ENCODE measurements at regions of chr10 and their contacts with region 1.

Region 1: GRCh38 chr10:114694752-114695151 is 36.7 kb upstream of the ABLIM1 start:
- DNase-seq: peak in 1 of 2 experiments; percentile 81
- H3K4me3 ChIP-seq: no peak overlapping the region
- H3K27ac ChIP-seq: no peak overlapping the region
- H3K4me1 ChIP-seq: no peaks in the 10 kb centered on the region
- H3K27me3 ChIP-seq: no peaks in the 10 kb centered on the region
- CTCF ChIP-seq: peak; percentile 73 to 86 (median 83)
- EP300 ChIP-seq: no peak
- POLR2A ChIP-seq: no peak
- RAD21 ChIP-seq: peak; percentile 79 to 85

Region 2: GRCh38 chr10:114681542-114681941 is 13.2 kb before region 1 on chr10:
- CTCF ChIA-PET with region 1: interaction called, 22 read pairs
- POLR2A ChIA-PET with region 1: no interaction called
- DNase-seq: no peak
- H3K4me3 ChIP-seq: no peak overlapping the region
- H3K27ac ChIP-seq: no peak overlapping the region
- H3K4me1 ChIP-seq: no peaks in the 10 kb centered on the region; a peak in 1 of 7 replicates
- H3K27me3 ChIP-seq: no peaks in the 10 kb centered on the region
- CTCF ChIP-seq: no peak
- EP300 ChIP-seq: no peak
- POLR2A ChIP-seq: no peak
- RAD21 ChIP-seq: no peak

Measured in H1 (cell line).